ENCODE measurements at regions of chr12 and their contacts with region 1.

Region 1: DNA sequence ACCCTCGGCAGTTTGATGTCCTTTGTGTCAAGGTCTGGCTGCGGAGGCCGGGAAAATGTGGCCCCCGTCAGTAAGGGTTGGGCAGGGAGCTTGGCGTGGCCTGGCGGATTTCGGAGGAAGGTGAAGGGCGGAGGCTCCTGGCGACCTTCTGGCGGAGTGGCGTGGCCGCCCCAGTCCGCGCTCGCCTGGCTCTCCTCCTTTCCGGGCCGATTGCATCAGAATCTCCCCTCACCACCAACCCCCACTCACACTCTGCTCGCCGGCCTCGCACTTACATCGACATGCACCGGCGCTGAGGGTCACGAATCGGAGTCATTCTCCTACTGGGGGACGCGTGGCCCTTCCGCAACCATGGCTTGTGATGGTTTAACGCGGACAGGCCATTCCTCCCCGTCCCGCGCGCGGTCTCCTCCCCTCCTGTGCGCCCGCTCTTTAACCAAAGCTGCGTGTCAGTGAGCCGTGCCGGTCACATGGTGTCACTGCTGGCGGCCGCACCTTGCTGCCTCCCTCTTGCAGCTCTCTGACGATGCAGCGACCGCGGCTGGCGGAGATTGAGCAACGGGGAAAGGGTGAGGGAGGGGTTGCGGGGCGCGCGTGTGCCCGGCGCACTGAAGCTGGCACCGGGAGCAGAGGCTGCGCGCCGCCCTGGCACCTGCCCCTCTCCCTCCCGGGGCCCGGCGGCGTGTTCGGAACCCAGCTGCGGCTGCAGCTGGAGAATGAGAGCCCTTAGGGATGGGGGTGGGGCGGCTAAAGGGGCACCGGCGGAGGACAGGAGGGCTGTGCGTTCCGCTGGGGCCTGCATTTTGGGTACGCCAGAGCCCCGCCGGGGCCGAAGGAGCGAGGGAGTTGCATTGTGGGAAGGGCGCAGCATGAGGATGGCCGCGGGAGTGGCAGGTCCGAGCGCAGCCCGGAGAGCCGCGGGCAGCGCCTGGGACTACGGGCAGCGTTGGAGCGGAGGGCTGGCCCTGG is at the start of gene SLC38A1:
- DNase-seq: peak; percentile 92 to 93
- H3K4me3 ChIP-seq: peak within 1 kb of the TSS; percentile 54 to 77 (median 73)
- H3K27ac ChIP-seq: peak within 1 kb of the TSS; percentile 95 to 97
- H3K4me1 ChIP-seq: peaks cover 0 to 9% of the 10 kb centered on the region in 2 donors
- H3K27me3 ChIP-seq: no peaks in the 10 kb centered on the region
- CTCF ChIP-seq: no peak
- POLR2A ChIP-seq: peak; percentile 92
- total RNA-seq, gene SLC38A1: 7.8 to 219 (median 101) TPM

Region 2: GRCh38 chr12:46198913-46199312 is 70.0 kb before region 1 on chr12:
- intact Hi-C with region 1: loop called (anchors 10 kb)
- DNase-seq: no peak
- H3K4me3 ChIP-seq: no peak overlapping the region
- H3K27ac ChIP-seq: peak overlapping the region in 1 of 2 donors; percentile 13
- H3K4me1 ChIP-seq: no peaks in the 10 kb centered on the region
- H3K27me3 ChIP-seq: no peaks in the 10 kb centered on the region
- CTCF ChIP-seq: no peak
- POLR2A ChIP-seq: no peak

Region 3: GRCh38 chr12:46342562-46343033 is 73.7 kb after region 1 on chr12:
- intact Hi-C with region 1: no loop called
- DNase-seq: no peak
- H3K4me3 ChIP-seq: no peak overlapping the region
- H3K27ac ChIP-seq: no peak overlapping the region
- H3K4me1 ChIP-seq: no peaks in the 10 kb centered on the region
- H3K27me3 ChIP-seq: no peaks in the 10 kb centered on the region
- CTCF ChIP-seq: peak in 1 of 3 donors; percentile 33
- POLR2A ChIP-seq: no peak

Region 4: GRCh38 chr12:47356129-47356700 is 1087.3 kb after region 1 on chr12:
- intact Hi-C with region 1: no loop called
- DNase-seq: no peak
- H3K4me3 ChIP-seq: no peak overlapping the region
- H3K27ac ChIP-seq: no peak overlapping the region
- H3K4me1 ChIP-seq: no peaks in the 10 kb centered on the region
- H3K27me3 ChIP-seq: no peaks in the 10 kb centered on the region
- CTCF ChIP-seq: no peak
- POLR2A ChIP-seq: no peak

Region 5: GRCh38 chr12:47419497-47419896 is 1150.6 kb after region 1 on chr12:
- intact Hi-C with region 1: no loop called
- DNase-seq: no peak
- H3K4me3 ChIP-seq: no peak overlapping the region
- H3K27ac ChIP-seq: no peak overlapping the region
- H3K4me1 ChIP-seq: no peaks in the 10 kb centered on the region
- H3K27me3 ChIP-seq: no peaks in the 10 kb centered on the region
- CTCF ChIP-seq: no peak
- POLR2A ChIP-seq: no peak

Measured in breast epithelium (tissue), 4 donors.